HAP-1 (cell line): ENCODE measurements at regions of chr9 and their contacts with region 1.

Region 1: DNA sequence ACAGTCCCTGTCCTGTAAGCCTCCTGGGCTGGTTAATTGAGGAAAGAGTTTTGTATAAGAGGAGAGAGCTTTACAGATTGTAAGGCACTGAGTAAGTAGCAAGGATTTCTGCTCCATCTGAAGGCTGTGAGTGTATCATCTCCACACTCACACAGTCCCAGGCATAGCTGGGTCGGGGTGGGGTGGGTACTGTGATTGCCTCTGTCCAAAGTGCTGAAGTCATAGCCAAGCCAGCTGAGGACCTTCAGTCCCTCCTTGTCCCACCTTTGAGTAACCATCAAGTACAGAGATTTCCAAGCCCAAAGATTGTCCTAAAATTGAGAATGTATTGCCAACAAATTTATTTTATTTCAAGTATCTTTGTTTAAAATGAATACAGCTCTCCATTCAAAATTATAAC is 5.5 kb upstream of the DNAJB5 start:
- DNase-seq: peak in 1 of 2 experiments; percentile 59
- H3K4me3 ChIP-seq: no peak overlapping the region
- H3K4me1 ChIP-seq: peaks cover 5% of the 10 kb centered on the region; the same call in 1 of the 2 replicates
- H3K27me3 ChIP-seq: peaks cover 2% of the 10 kb centered on the region; the same call in 1 of the 2 replicates

Region 2: DNA sequence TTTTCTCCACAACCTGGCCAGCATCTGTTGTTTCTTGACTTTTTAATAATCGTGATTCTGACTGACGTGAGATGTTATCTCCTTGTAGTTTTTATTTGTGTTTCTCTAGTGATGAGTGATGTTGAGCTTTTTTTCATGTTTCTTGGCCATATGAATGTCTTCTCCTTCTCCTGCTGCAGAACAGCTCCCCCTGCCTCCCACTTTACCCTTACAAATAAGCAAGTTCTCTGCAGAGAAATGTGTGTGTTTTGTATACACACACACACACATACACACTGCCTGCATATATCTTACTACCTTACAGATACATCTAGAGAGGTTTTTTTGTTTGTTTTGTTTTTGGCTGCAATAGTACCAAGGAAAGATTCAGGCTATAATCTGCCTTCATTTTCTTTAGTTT is 114.7 kb before region 1 on chr9:
- in situ Hi-C with region 1: no loop called
- DNase-seq: no peak
- H3K4me3 ChIP-seq: no peak overlapping the region
- H3K4me1 ChIP-seq: no peaks in the 10 kb centered on the region
- H3K27me3 ChIP-seq: 0 out of 2 replicates have a peak, but pooled peaks cover 2% of the 10 kb centered on the region

Region 3: GRCh38 chr9:34907044-34907443 is 77.0 kb before region 1 on chr9:
- in situ Hi-C with region 1: loop called (anchors 5 kb)
- DNase-seq: no peak
- H3K4me3 ChIP-seq: no peak overlapping the region
- H3K4me1 ChIP-seq: no peaks in the 10 kb centered on the region
- H3K27me3 ChIP-seq: 0 out of 2 replicates have a peak, but pooled peaks cover 2% of the 10 kb centered on the region

Region 4: DNA sequence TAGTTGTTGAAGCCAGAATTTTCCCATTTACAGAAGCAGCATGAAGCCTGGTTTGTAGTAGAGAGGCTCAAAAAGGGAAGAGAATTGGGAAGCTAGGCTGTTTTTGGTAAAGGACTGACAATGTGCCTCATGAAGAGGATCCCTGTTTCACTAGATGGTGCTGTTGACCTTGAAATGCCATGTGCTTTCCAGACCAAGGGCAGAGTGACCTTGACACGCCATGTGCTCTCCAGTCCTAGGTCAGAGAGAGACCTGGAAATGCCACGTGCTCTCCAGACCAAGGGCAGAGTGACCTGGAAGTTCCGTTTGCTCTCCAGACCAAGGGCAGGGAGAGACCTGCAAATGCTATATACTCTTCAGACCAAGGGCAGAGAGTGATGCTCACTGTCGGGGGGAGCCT is 209.7 kb after region 1 on chr9:
- in situ Hi-C with region 1: no loop called
- DNase-seq: no peak
- H3K4me3 ChIP-seq: no peak overlapping the region
- H3K4me1 ChIP-seq: peaks cover 4% of the 10 kb centered on the region
- H3K27me3 ChIP-seq: no peaks in the 10 kb centered on the region